ENCODE measurements at regions of chr10 and their contacts with region 1.

Region 1: GRCh38 chr10:68301790-68302502 is 29.9 kb upstream of the HNRNPH3 start:
- DNase-seq: peak; percentile 58
- H3K4me3 Mint-ChIP-seq: no peak overlapping the region
- H3K27ac Mint-ChIP-seq: no peak overlapping the region
- H3K4me1 Mint-ChIP-seq: no peaks in the 10 kb centered on the region
- H3K27me3 Mint-ChIP-seq: no peaks in the 10 kb centered on the region
- CTCF ChIP-seq: peak; percentile 56

Region 2: DNA sequence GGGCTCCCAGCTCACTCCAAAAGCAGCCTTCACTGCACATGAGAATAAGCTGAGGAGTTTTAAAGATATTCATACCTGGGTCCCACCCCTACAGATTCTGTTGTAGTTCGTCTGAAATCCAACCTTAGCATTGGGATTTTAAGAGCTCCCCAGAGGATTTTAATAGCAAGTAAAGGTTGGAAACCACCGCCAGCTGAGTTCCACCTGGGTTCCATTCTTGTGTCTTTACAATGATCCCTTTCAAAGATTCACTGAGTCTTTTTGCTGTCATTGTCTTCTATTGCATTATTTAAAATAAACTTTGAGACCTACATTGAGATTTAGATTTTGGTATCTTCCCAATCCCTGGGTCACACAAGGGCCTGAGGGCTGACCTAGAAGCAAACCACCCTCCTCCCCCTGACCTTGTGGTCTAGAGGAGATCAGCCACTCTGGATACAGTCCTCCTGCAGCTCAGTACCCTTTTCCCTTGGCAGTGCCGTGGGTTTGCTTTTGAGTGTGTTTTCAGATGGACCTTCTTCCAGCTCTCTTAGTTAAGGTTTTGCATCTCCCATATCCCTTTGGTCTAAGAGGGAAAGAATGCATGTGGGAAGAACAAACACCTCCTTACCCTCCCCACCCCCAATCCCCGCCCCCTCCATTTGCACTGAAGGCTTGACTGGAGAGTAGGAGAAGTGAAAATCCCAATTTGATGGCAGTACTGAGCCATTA is 440.0 kb before region 1 on chr10:
- CTCF ChIA-PET with region 1: interaction called, 10 read pairs
- POLR2A ChIA-PET with region 1: no interaction called
- intact Hi-C with region 1: loop called (anchors 5 kb)
- DNase-seq: no peak
- H3K4me3 Mint-ChIP-seq: no peak overlapping the region
- H3K27ac Mint-ChIP-seq: no peak overlapping the region
- H3K4me1 Mint-ChIP-seq: no peaks in the 10 kb centered on the region
- H3K27me3 Mint-ChIP-seq: no peaks in the 10 kb centered on the region
- CTCF ChIP-seq: no peak

Region 3: GRCh38 chr10:68208424-68209042 is 93.4 kb before region 1 on chr10:
- CTCF ChIA-PET with region 1: interaction called, 168 read pairs
- POLR2A ChIA-PET with region 1: interaction called, 13 read pairs
- intact Hi-C with region 1: loop called (anchors 1 kb)
- DNase-seq: peak; percentile 79
- H3K4me3 Mint-ChIP-seq: no peak overlapping the region
- H3K27ac Mint-ChIP-seq: no peak overlapping the region
- H3K4me1 Mint-ChIP-seq: no peaks in the 10 kb centered on the region
- H3K27me3 Mint-ChIP-seq: no peaks in the 10 kb centered on the region
- CTCF ChIP-seq: peak; percentile 59

Region 4: GRCh38 chr10:68288717-68289116 is 13.2 kb before region 1 on chr10:
- CTCF ChIA-PET with region 1: interaction called, 18 read pairs
- POLR2A ChIA-PET with region 1: no interaction called
- intact Hi-C with region 1: no loop called
- DNase-seq: no peak
- H3K4me3 Mint-ChIP-seq: no peak overlapping the region
- H3K27ac Mint-ChIP-seq: no peak overlapping the region
- H3K4me1 Mint-ChIP-seq: no peaks in the 10 kb centered on the region
- H3K27me3 Mint-ChIP-seq: no peaks in the 10 kb centered on the region
- CTCF ChIP-seq: no peak

Region 5: DNA sequence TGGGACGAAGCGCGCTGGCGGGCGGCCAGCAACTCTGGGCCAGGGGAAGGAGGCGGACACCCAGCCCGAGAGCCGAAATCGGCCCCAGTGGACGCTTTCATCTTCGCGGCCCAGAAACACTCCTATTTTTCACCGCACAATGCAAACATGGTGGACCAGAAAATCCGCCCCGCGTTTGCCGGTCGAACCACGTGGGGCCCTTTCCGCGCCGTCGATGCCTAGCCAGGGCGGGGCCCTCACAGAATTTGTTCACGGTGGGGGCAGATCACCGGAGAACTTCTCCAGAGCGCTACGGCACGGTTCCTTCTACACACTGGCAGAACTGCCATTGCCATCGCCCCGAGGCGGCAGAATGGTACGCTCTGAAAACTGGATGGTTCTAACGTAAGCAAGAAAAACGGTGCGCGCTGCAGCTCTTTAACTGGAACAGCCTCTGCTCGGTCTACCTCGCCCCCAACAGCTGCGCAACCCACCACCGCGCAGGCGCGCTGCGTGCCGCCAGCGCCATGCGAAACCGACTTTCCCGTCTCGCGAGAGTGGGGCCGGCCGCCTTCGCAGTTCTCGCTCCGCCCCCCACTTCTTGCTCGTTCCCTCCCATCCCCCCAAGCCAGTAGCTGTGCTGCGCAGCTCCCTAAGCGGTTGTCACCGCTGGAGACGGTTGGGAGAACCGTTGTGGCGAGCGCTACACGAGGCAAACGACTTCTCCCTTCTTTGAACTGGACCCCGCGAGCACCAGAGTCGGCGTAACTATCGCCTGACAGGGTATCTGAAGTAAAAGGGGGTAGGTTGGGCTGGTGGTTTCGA is 29.7 kb after region 1 on chr10 and contains the start of gene HNRNPH3:
- CTCF ChIA-PET with region 1: interaction called, 17 read pairs
- POLR2A ChIA-PET with region 1: interaction called, 6 read pairs
- intact Hi-C with region 1: no loop called
- DNase-seq: peak; percentile 97
- H3K4me3 Mint-ChIP-seq: peak within 1 kb of the TSS; percentile 97
- H3K27ac Mint-ChIP-seq: peak within 1 kb of the TSS; percentile 99
- H3K4me1 Mint-ChIP-seq: peaks cover 29% of the 10 kb centered on the region
- H3K27me3 Mint-ChIP-seq: no peaks in the 10 kb centered on the region
- CTCF ChIP-seq: no peak
- total RNA-seq, gene HNRNPH3: 216 and 285 TPM in 2 replicates

Measured in MCF 10A (cell line).